ENCODE measurements at regions of chr17 and their contacts with region 1.

Region 1: GRCh38 chr17:49677933-49678847 is at the start of gene SPOP:
- DNase-seq: peak; percentile 99 to 100 (median 100)
- H3K4me3 ChIP-seq: peak within 1 kb of the TSS; percentile 95 to 100
- H3K4me3 Mint-ChIP-seq: peak within 1 kb of the TSS; percentile 91 to 99 (median 94)
- H3K27ac ChIP-seq: peak within 1 kb of the TSS; percentile 94
- H3K27ac Mint-ChIP-seq: peak within 1 kb of the TSS; percentile 93 to 99 (median 98)
- H3K4me1 ChIP-seq: peaks cover 42% of the 10 kb centered on the region
- H3K4me1 Mint-ChIP-seq: peaks cover 35 to 52% (median 42%) of the 10 kb centered on the region in 4 donors
- H3K27me3 ChIP-seq: no peaks in the 10 kb centered on the region
- H3K27me3 Mint-ChIP-seq: peaks cover 0 to 1% of the 10 kb centered on the region in 2 donors
- total RNA-seq, gene SPOP: 83.1 to 86.1 TPM

Region 2: GRCh38 chr17:49361902-49362722 is 316.1 kb before region 1 on chr17 and contains the start of gene ZNF652:
- CTCF ChIA-PET with region 1: no interaction called
- POLR2A ChIA-PET with region 1: interaction called, 3 read pairs
- intact Hi-C with region 1: loop called (anchors 5 kb)
- DNase-seq: peak; percentile 96 to 98 (median 97)
- H3K4me3 ChIP-seq: peak within 1 kb of the TSS; percentile 48 to 61
- H3K4me3 Mint-ChIP-seq: peak within 1 kb of the TSS; percentile 91 to 98 (median 94)
- H3K27ac ChIP-seq: peak within 1 kb of the TSS; percentile 66
- H3K27ac Mint-ChIP-seq: peak within 1 kb of the TSS; percentile 91 to 98 (median 96)
- H3K4me1 ChIP-seq: peaks cover 62% of the 10 kb centered on the region
- H3K4me1 Mint-ChIP-seq: peaks cover 43 to 64% (median 57%) of the 10 kb centered on the region in 4 donors
- H3K27me3 ChIP-seq: no peaks in the 10 kb centered on the region
- H3K27me3 Mint-ChIP-seq: no peaks in the 10 kb centered on the region
- total RNA-seq, gene ZNF652: 64.2 to 68.6 TPM

Region 3: GRCh38 chr17:49414622-49415350 is 263.4 kb before region 1 on chr17 and contains the start of gene PHB1:
- CTCF ChIA-PET with region 1: no interaction called
- POLR2A ChIA-PET with region 1: interaction called, 6 read pairs
- intact Hi-C with region 1: loop called (anchors 1 kb)
- DNase-seq: peak; percentile 93 to 99 (median 94)
- H3K4me3 ChIP-seq: peak within 1 kb of the TSS; percentile 81 to 89
- H3K4me3 Mint-ChIP-seq: peak within 1 kb of the TSS; percentile 97 to 99 (median 98)
- H3K27ac ChIP-seq: peak within 1 kb of the TSS; percentile 65
- H3K27ac Mint-ChIP-seq: peak within 1 kb of the TSS; percentile 78 to 99 (median 96)
- H3K4me1 ChIP-seq: peaks cover 18% of the 10 kb centered on the region
- H3K4me1 Mint-ChIP-seq: peaks cover 14 to 27% (median 20%) of the 10 kb centered on the region in 4 donors
- H3K27me3 ChIP-seq: no peaks in the 10 kb centered on the region
- H3K27me3 Mint-ChIP-seq: no peaks in the 10 kb centered on the region
- total RNA-seq, gene PHB1: 62.0 to 64.2 TPM

Region 4: GRCh38 chr17:49456183-49456965 is 221.8 kb before region 1 on chr17:
- CTCF ChIA-PET with region 1: no interaction called
- POLR2A ChIA-PET with region 1: no interaction called
- intact Hi-C with region 1: no loop called
- DNase-seq: no peak
- H3K4me3 ChIP-seq: no peak overlapping the region
- H3K4me3 Mint-ChIP-seq: no peak overlapping the region
- H3K27ac ChIP-seq: no peak overlapping the region
- H3K27ac Mint-ChIP-seq: no peak overlapping the region
- H3K4me1 ChIP-seq: peaks cover 8% of the 10 kb centered on the region
- H3K4me1 Mint-ChIP-seq: peaks cover 0 to 9% (median 6%) of the 10 kb centered on the region in 4 donors
- H3K27me3 ChIP-seq: peaks cover 6% of the 10 kb centered on the region
- H3K27me3 Mint-ChIP-seq: peaks cover 31 to 37% of the 10 kb centered on the region in 2 donors

Region 5: DNA sequence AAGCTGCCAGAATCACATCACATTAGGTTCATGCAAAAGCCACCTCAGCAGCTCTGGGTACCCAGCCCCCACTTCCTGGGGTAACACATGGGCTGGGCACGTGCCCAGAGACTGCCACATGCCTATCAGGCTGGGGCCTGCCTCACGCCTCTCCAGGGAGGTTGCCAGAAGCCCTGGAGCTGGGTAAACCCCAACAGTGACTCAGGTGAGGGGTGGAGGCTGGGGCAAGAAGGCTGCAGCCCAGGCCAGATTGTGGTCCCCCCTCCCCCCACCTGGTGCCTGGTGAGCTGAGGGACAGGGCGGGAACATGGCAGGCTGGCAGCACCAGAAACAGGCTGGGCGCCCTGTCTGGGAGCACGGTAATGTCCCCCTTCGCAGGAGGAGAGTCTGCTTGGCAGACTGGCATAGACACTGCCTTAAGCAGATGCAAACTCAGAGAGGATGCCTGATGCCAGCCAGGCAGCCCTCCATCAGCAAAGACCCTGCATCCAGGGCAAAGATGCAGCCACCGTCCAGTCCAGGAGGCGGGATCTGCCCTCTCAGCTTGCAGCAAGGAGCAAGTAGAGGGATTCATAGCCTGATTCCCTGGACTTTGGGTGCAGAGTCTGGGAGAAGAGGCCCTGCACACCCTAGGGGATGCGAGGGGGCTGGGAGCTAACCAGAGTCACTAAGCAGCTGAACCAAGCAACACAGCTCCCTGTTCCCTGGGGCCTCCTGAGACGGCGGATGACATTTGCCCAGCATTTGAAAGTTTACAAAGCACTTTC is 154.3 kb before region 1 on chr17:
- CTCF ChIA-PET with region 1: no interaction called
- POLR2A ChIA-PET with region 1: no interaction called
- intact Hi-C with region 1: no loop called
- DNase-seq: peak; percentile 19 to 81 (median 26)
- H3K4me3 ChIP-seq: no peak overlapping the region
- H3K4me3 Mint-ChIP-seq: no peak overlapping the region
- H3K27ac ChIP-seq: no peak overlapping the region
- H3K27ac Mint-ChIP-seq: peak overlapping the region in 4 of 7 donors; percentile 21 to 66 (median 48)
- H3K4me1 ChIP-seq: peaks cover 7% of the 10 kb centered on the region
- H3K4me1 Mint-ChIP-seq: peaks cover 2 to 14% (median 7%) of the 10 kb centered on the region in 4 donors
- H3K27me3 ChIP-seq: no peaks in the 10 kb centered on the region
- H3K27me3 Mint-ChIP-seq: peaks cover 4 to 7% of the 10 kb centered on the region in 2 donors

Region 6: GRCh38 chr17:49567871-49568694 is 110.1 kb before region 1 on chr17:
- CTCF ChIA-PET with region 1: interaction called, 5 read pairs
- POLR2A ChIA-PET with region 1: interaction called, 6 read pairs
- intact Hi-C with region 1: loop called (anchors 1 kb)
- DNase-seq: peak; percentile 68 to 77 (median 74)
- H3K4me3 ChIP-seq: peak overlapping the region in 1 of 2 donors; percentile 56
- H3K4me3 Mint-ChIP-seq: peak overlapping the region; percentile 28 to 82 (median 60)
- H3K27ac ChIP-seq: no peak overlapping the region
- H3K27ac Mint-ChIP-seq: peak overlapping the region in 2 of 7 donors; percentile 46 to 54
- H3K4me1 ChIP-seq: peaks cover 10% of the 10 kb centered on the region
- H3K4me1 Mint-ChIP-seq: peaks cover 8 to 29% (median 19%) of the 10 kb centered on the region in 4 donors
- H3K27me3 ChIP-seq: no peaks in the 10 kb centered on the region
- H3K27me3 Mint-ChIP-seq: peaks cover 6 to 11% of the 10 kb centered on the region in 2 donors

Region 7: DNA sequence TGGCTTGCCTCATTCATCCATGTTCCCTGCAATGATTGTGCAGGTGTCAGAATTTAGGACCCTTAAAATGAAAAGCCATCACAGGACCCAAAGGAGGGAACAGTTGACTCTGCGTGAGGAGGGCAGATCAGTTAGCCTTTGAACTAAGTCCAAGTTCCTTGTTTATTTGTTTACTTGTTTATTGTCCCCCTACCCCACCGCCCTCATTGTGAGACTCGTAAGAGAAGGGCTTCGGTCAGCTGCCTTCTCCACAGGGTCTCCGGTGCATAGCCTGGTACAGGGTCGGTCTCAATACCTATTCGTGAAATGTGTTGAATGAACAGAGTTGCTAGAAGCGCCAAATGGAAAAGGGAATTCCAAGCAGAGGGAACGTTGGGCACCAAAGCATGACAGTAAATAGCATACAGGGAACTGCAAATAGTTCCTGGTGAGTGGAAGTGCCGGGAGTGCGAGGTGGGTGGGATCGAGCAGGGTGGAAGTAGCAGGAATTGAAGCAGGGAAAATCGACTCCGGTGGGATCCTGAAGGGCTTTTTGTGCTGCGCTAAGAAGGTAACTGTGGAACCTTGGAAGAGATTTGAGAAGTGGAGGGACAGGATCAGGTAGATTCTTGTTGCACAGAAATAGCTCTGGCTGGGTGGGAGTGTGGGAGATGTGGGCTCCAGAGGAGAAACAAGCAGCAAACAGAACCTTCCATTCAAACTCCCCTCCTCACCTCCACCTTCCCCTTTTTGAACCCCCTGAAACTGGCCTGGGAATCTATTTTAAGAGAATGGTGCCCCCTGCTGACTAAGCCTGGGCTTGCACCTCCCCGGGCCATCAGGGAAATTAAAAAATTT is 16.9 kb after region 1 on chr17:
- CTCF ChIA-PET with region 1: interaction called, 10 read pairs
- POLR2A ChIA-PET with region 1: interaction called, 10 read pairs
- intact Hi-C with region 1: no loop called
- DNase-seq: peak; percentile 52 to 70 (median 61)
- H3K4me3 ChIP-seq: no peak overlapping the region
- H3K4me3 Mint-ChIP-seq: peak overlapping the region in 3 of 8 donors; percentile 1 to 41 (median 4)
- H3K27ac ChIP-seq: no peak overlapping the region
- H3K27ac Mint-ChIP-seq: peak overlapping the region; percentile 65 to 90 (median 83)
- H3K4me1 ChIP-seq: peaks cover 19% of the 10 kb centered on the region
- H3K4me1 Mint-ChIP-seq: peaks cover 22 to 51% (median 30%) of the 10 kb centered on the region in 4 donors
- H3K27me3 ChIP-seq: no peaks in the 10 kb centered on the region
- H3K27me3 Mint-ChIP-seq: no peaks in the 10 kb centered on the region

Region 8: DNA sequence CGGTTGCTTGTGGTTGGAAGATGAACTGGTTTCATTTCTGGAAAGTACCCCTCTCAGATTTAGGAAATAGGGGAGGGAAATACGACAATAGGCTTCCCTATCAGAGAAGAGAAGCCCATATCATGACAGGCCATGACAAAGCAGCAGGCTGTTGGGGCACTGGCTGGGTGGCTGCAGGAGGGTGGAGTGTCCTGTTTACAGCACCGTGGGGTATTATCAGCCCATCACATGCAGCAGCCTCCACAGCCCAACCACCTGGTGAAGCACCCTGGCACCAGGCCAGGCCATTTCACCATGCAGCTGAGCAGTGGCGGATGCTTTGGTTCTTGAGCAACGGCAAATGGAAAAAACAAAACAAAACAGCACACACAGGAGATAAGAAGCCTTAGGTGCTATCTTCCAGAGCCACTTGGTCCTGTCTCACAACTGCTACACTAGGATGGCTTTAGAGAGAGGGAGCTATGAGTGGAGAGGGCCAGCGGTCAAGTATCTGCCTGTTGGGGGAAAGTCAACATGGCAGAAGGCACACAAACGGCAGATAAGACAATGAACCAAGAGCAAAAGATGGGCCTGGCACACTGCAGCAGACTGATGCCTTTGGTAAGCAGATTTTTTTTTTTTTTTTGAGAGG is 61.6 kb after region 1 on chr17:
- CTCF ChIA-PET with region 1: no interaction called
- POLR2A ChIA-PET with region 1: interaction called, 10 read pairs
- intact Hi-C with region 1: loop called (anchors 1 kb)
- DNase-seq: peak; percentile 96 to 100 (median 99)
- H3K4me3 ChIP-seq: peak overlapping the region; percentile 32 to 80
- H3K4me3 Mint-ChIP-seq: peak overlapping the region; percentile 93 to 99 (median 97)
- H3K27ac ChIP-seq: peak overlapping the region; percentile 99
- H3K27ac Mint-ChIP-seq: peak overlapping the region; percentile 99 to 100 (median 100)
- H3K4me1 ChIP-seq: peaks cover 97% of the 10 kb centered on the region
- H3K4me1 Mint-ChIP-seq: peaks cover 68 to 94% (median 78%) of the 10 kb centered on the region in 4 donors
- H3K27me3 ChIP-seq: no peaks in the 10 kb centered on the region
- H3K27me3 Mint-ChIP-seq: no peaks in the 10 kb centered on the region

Measured in CD4-positive, alpha-beta memory T cell (primary cell).